Stomach (tissue), 19 donors: ENCODE measurements at regions of chr2 and their contacts with region 1.

Region 1: GRCh38 chr2:231104115-231104713 is 20.6 kb downstream of the HTR2B start:
- DNase-seq: peak; percentile 54 to 87
- H3K4me3 ChIP-seq: no peak overlapping the region
- H3K27ac ChIP-seq: peak overlapping the region in 3 of 5 donors; percentile 11 to 58 (median 53)
- H3K4me1 ChIP-seq: peaks cover 0 to 47% (median 14%) of the 10 kb centered on the region in 4 donors
- H3K27me3 ChIP-seq: no peaks in the 10 kb centered on the region
- CTCF ChIP-seq: peak in 4 of 7 experiments; percentile 69 to 83 (median 75)
- EP300 ChIP-seq: no peak
- POLR2A ChIP-seq: no peak

Region 2: GRCh38 chr2:231056453-231057424 is 47.5 kb before region 1 on chr2 and contains the start of gene PSMD1:
- intact Hi-C with region 1: no loop called
- DNase-seq: peak; percentile 93 to 98
- H3K4me3 ChIP-seq: peak within 1 kb of the TSS; percentile 72 to 99 (median 97)
- H3K27ac ChIP-seq: peak within 1 kb of the TSS; percentile 92 to 98 (median 93)
- H3K4me1 ChIP-seq: peaks cover 28 to 57% (median 49%) of the 10 kb centered on the region in 4 donors
- H3K27me3 ChIP-seq: no peaks in the 10 kb centered on the region
- CTCF ChIP-seq: peak in 5 of 7 experiments; percentile 77 to 96 (median 93)
- EP300 ChIP-seq: no peak
- POLR2A ChIP-seq: no peak
- total RNA-seq, gene PSMD1: 34.6 to 96.4 (median 43.8) TPM

Region 3: DNA sequence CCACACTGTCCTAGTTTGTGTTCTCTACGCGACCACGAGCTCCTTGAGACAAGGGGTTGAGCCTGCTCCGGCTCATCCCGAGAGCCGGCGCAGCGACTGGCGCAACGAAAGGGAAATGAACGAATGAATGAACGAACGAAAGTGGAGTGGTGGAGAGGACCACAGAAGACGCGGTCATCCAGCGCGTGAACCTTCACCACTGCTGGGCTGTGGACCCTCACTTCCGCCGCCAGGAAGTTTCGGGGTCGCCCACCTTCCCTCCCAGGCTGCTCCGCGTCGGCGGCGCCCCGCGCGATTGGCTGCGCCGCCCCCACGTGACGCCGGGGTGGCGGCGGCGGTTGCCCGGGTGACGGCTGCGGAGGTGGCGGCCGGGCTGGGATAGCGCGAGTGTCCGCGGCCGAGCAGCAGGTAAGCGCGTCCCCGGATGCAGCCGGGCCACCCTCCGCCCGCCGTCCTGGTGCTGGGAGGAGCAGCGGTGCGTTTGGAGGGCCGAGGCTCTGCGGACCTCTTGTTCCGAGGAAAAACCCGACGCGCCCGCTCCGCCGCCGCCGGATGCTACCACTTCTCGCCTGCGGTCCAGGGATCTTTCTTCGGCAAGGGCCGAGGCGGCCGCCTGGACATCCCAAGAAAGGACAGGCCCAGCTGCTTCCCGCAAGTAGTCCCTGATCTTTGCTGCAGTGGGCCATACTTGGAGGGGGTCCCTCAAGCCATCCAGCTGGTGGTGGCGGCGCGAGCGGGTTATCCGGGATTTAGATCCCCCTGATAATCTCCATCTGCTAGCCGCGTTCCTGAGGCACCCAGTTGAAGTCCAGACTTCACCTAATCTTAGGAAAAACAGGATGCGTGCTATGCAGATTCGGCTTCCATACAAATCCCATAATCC is 94.3 kb after region 1 on chr2 and contains the start of gene ARMC9:
- intact Hi-C with region 1: loop called (anchors 10 kb)
- DNase-seq: peak; percentile 77 to 94
- H3K4me3 ChIP-seq: peak within 1 kb of the TSS; percentile 72 to 86 (median 82)
- H3K27ac ChIP-seq: peak within 1 kb of the TSS; percentile 33 to 83 (median 71)
- H3K4me1 ChIP-seq: peaks cover 10 to 42% (median 28%) of the 10 kb centered on the region in 4 donors
- H3K27me3 ChIP-seq: no peaks in the 10 kb centered on the region
- CTCF ChIP-seq: no peak
- EP300 ChIP-seq: no peak
- POLR2A ChIP-seq: no peak
- total RNA-seq, gene ARMC9: 4.6 to 114 (median 45.5) TPM